ENCODE measurements at regions of chr18 and their contacts with region 1.

Region 1: DNA sequence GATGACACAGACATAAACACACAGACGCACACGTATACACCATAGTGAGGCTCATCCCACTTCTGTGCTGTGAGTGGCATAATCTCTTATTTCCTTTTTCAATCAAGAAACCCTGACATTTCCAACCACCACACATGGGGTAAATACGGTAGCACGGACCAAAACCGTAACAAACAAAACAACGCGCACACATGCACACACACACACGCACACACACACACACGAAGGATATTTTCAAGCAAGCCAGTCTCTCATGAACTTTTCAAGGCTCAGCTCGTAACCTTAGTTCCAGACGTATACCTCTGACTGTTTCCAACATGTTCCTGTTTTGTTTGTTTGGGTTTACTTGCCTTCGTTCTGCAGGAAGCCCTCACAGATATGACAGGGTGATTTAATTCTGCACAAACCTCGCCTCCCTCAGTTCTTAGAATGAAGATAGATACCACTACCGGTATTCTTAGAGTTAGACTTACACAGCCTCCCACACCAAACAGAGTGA is 119.8 kb downstream of the BCL2 start:
- DNase-seq: peak in 7 of 9 donors; percentile 57 to 82 (median 74)
- ATAC-seq: peak; percentile 84
- H3K4me3 ChIP-seq: peak overlapping the region; percentile 63
- H3K4me3 Mint-ChIP-seq: no peak overlapping the region
- H3K27ac ChIP-seq: peak overlapping the region; percentile 73
- H3K27ac Mint-ChIP-seq: no peak overlapping the region
- H3K4me1 ChIP-seq: peaks cover 37 to 71% of the 10 kb centered on the region in 2 donors
- H3K4me1 Mint-ChIP-seq: peaks cover 19 to 49% (median 33%) of the 10 kb centered on the region in 7 donors
- H3K27me3 ChIP-seq: no peaks in the 10 kb centered on the region
- H3K27me3 Mint-ChIP-seq: no peaks in the 10 kb centered on the region

Region 2: DNA sequence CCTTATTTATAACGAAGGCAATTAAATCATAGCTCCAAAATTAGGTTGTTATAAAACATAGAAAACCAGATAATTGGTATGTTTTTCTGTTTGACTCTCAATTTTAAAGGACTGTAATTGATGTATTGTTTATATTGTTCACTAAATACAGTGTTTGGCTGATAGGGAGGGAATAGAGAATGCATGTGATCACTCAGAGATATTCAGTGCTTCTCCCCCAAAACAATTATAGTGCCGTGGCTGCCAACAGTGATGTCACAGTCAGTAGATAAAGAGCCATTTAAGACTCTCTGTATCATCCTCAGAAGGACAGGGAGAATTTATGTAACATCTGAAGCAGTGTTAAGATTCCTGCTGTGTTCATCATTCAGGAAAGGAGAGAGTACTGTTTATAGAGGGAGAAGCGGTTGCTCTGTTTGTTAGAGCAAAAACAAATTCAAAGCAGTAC is 414.8 kb before region 1 on chr18:
- CTCF ChIA-PET with region 1: no interaction called
- POLR2A ChIA-PET with region 1: no interaction called
- intact Hi-C with region 1: no loop called
- DNase-seq: no peak
- ATAC-seq: no peak
- H3K4me3 ChIP-seq: no peak overlapping the region
- H3K4me3 Mint-ChIP-seq: peak overlapping the region in 2 of 10 donors; percentile 3 to 22
- H3K27ac ChIP-seq: no peak overlapping the region
- H3K27ac Mint-ChIP-seq: no peak overlapping the region
- H3K4me1 ChIP-seq: peaks cover 0 to 10% of the 10 kb centered on the region in 2 donors
- H3K4me1 Mint-ChIP-seq: peaks cover 27 to 49% (median 33%) of the 10 kb centered on the region in 7 donors
- H3K27me3 ChIP-seq: no peaks in the 10 kb centered on the region
- H3K27me3 Mint-ChIP-seq: peaks cover 0 to 2% (median 0%) of the 10 kb centered on the region in 5 donors

Region 3: DNA sequence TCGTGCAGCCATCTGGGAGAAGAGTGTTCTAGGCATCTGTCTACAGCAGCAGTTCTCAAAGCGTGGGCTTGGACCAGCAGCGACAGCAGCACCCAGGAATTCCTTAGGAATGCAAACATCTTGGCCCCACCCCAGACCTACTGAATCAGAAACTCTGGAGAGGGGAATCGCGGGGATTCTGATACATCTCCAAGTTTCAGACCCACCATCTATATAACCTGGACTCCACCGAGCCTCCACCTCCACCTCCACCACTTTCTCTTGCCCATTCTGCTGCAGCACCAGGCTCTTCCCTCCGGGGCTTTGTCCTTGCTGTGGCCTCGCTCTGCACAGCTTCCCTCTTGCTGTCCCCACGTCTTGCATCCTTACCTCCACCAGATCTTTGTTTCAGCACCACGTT is 136.6 kb before region 1 on chr18:
- CTCF ChIA-PET with region 1: no interaction called
- POLR2A ChIA-PET with region 1: no interaction called
- intact Hi-C with region 1: no loop called
- DNase-seq: no peak
- ATAC-seq: no peak
- H3K4me3 ChIP-seq: no peak overlapping the region
- H3K4me3 Mint-ChIP-seq: no peak overlapping the region
- H3K27ac ChIP-seq: no peak overlapping the region
- H3K27ac Mint-ChIP-seq: no peak overlapping the region
- H3K4me1 ChIP-seq: no peaks in the 10 kb centered on the region
- H3K4me1 Mint-ChIP-seq: peaks cover 0 to 5% (median 0%) of the 10 kb centered on the region in 7 donors
- H3K27me3 ChIP-seq: no peaks in the 10 kb centered on the region
- H3K27me3 Mint-ChIP-seq: peaks cover 0 to 38% (median 4%) of the 10 kb centered on the region in 5 donors

Region 4: GRCh38 chr18:63131106-63131958 is 68.5 kb before region 1 on chr18:
- CTCF ChIA-PET with region 1: interaction called, 4 read pairs
- POLR2A ChIA-PET with region 1: interaction called, 4 read pairs
- intact Hi-C with region 1: loop called (anchors 2 kb)
- DNase-seq: peak in 7 of 9 donors; percentile 51 to 71 (median 69)
- ATAC-seq: peak; percentile 80
- H3K4me3 ChIP-seq: no peak overlapping the region
- H3K4me3 Mint-ChIP-seq: peak overlapping the region in 9 of 10 donors; percentile 13 to 81 (median 45)
- H3K27ac ChIP-seq: peak overlapping the region; percentile 61
- H3K27ac Mint-ChIP-seq: peak overlapping the region in 8 of 9 donors; percentile 36 to 94 (median 83)
- H3K4me1 ChIP-seq: peaks cover 9 to 18% of the 10 kb centered on the region in 2 donors
- H3K4me1 Mint-ChIP-seq: peaks cover 28 to 58% (median 50%) of the 10 kb centered on the region in 7 donors
- H3K27me3 ChIP-seq: no peaks in the 10 kb centered on the region
- H3K27me3 Mint-ChIP-seq: no peaks in the 10 kb centered on the region

Region 5: GRCh38 chr18:63186520-63187222 is 13.1 kb before region 1 on chr18:
- CTCF ChIA-PET with region 1: interaction called, 3 read pairs
- POLR2A ChIA-PET with region 1: interaction called, 52 read pairs
- intact Hi-C with region 1: loop called in 1 of 2 experiments (anchors 1 kb)
- DNase-seq: no peak
- ATAC-seq: no peak
- H3K4me3 ChIP-seq: no peak overlapping the region
- H3K4me3 Mint-ChIP-seq: peak overlapping the region in 8 of 10 donors; percentile 1 to 52 (median 14)
- H3K27ac ChIP-seq: no peak overlapping the region
- H3K27ac Mint-ChIP-seq: peak overlapping the region in 8 of 9 donors; percentile 8 to 86 (median 54)
- H3K4me1 ChIP-seq: peaks cover 6 to 31% of the 10 kb centered on the region in 2 donors
- H3K4me1 Mint-ChIP-seq: peaks cover 50 to 91% (median 80%) of the 10 kb centered on the region in 7 donors
- H3K27me3 ChIP-seq: no peaks in the 10 kb centered on the region
- H3K27me3 Mint-ChIP-seq: no peaks in the 10 kb centered on the region

Region 6: DNA sequence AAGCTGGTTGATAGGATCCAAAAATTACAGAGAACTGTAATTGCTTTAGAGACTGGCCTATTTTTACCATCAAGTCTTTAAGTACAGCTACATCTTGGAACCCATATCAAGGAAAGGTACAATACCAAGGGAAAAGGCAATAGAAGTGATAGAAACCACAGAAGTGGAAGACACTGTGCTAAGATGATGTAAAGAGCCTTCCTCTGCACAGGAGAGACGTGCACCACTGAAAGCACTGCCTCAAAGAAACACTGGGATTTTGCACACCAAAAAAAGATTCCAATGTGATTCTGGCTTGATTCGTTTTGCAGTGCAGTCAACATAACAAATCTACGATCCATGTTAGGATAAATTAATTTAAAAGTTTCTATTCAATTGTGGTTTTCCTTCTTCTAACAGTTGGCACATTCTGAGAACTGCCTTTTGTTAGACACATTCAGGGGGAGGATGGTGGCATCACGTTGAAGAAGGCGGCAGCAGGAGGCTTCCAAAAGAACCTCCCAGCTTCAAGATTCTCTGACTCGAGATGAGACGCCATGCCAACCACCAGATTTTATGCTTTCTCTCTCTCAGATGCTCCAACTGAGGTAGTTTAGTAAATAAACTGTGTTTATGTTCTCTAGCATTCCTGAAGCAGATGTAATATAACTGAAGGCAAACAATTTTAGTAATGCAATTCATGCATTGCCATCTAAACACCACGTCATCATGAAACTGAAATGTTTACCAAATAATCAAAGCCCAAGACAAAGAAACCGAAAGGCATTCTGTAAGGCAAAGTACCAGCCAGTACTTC is 16.9 kb after region 1 on chr18:
- CTCF ChIA-PET with region 1: interaction called, 5 read pairs
- POLR2A ChIA-PET with region 1: interaction called, 40 read pairs
- intact Hi-C with region 1: loop called (anchors 1 kb)
- DNase-seq: peak in 7 of 9 donors; percentile 34 to 62 (median 49)
- ATAC-seq: peak; percentile 73
- H3K4me3 ChIP-seq: peak overlapping the region; percentile 25
- H3K4me3 Mint-ChIP-seq: peak overlapping the region; percentile 54 to 89 (median 78)
- H3K27ac ChIP-seq: peak overlapping the region; percentile 63
- H3K27ac Mint-ChIP-seq: peak overlapping the region; percentile 70 to 94 (median 90)
- H3K4me1 ChIP-seq: peaks cover 58 to 75% of the 10 kb centered on the region in 2 donors
- H3K4me1 Mint-ChIP-seq: peaks cover 71 to 99% (median 93%) of the 10 kb centered on the region in 7 donors
- H3K27me3 ChIP-seq: no peaks in the 10 kb centered on the region
- H3K27me3 Mint-ChIP-seq: no peaks in the 10 kb centered on the region

Region 7: GRCh38 chr18:63236413-63236812 is 36.6 kb after region 1 on chr18:
- CTCF ChIA-PET with region 1: interaction called, 3 read pairs
- POLR2A ChIA-PET with region 1: interaction called, 4 read pairs
- intact Hi-C with region 1: loop called in 1 of 2 experiments (anchors 1 kb)
- DNase-seq: no peak
- ATAC-seq: peak; percentile 84
- H3K4me3 ChIP-seq: no peak overlapping the region
- H3K4me3 Mint-ChIP-seq: peak overlapping the region in 6 of 10 donors; percentile 9 to 62 (median 31)
- H3K27ac ChIP-seq: no peak overlapping the region
- H3K27ac Mint-ChIP-seq: peak overlapping the region; percentile 30 to 90 (median 72)
- H3K4me1 ChIP-seq: peaks cover 6 to 24% of the 10 kb centered on the region in 2 donors
- H3K4me1 Mint-ChIP-seq: peaks cover 49 to 83% (median 76%) of the 10 kb centered on the region in 7 donors
- H3K27me3 ChIP-seq: no peaks in the 10 kb centered on the region
- H3K27me3 Mint-ChIP-seq: no peaks in the 10 kb centered on the region

Region 8: GRCh38 chr18:63253428-63254372 is 53.9 kb after region 1 on chr18:
- CTCF ChIA-PET with region 1: no interaction called
- POLR2A ChIA-PET with region 1: no interaction called
- intact Hi-C with region 1: loop called in 1 of 2 experiments (anchors 1 kb)
- DNase-seq: no peak
- ATAC-seq: peak; percentile 74
- H3K4me3 ChIP-seq: no peak overlapping the region
- H3K4me3 Mint-ChIP-seq: peak overlapping the region in 8 of 10 donors; percentile 1 to 64 (median 32)
- H3K27ac ChIP-seq: no peak overlapping the region
- H3K27ac Mint-ChIP-seq: peak overlapping the region in 8 of 9 donors; percentile 9 to 79 (median 53)
- H3K4me1 ChIP-seq: peaks cover 7 to 25% of the 10 kb centered on the region in 2 donors
- H3K4me1 Mint-ChIP-seq: peaks cover 42 to 81% (median 73%) of the 10 kb centered on the region in 7 donors
- H3K27me3 ChIP-seq: no peaks in the 10 kb centered on the region
- H3K27me3 Mint-ChIP-seq: no peaks in the 10 kb centered on the region

Region 9: GRCh38 chr18:63265288-63265687 is 65.5 kb after region 1 on chr18:
- CTCF ChIA-PET with region 1: no interaction called
- POLR2A ChIA-PET with region 1: no interaction called
- intact Hi-C with region 1: no loop called
- DNase-seq: no peak
- ATAC-seq: no peak
- H3K4me3 ChIP-seq: no peak overlapping the region
- H3K4me3 Mint-ChIP-seq: peak overlapping the region in 1 of 10 donors; percentile 41
- H3K27ac ChIP-seq: no peak overlapping the region
- H3K27ac Mint-ChIP-seq: peak overlapping the region in 2 of 9 donors; percentile 36 to 70
- H3K4me1 ChIP-seq: peaks cover 16 to 23% of the 10 kb centered on the region in 2 donors
- H3K4me1 Mint-ChIP-seq: peaks cover 45 to 91% (median 76%) of the 10 kb centered on the region in 7 donors
- H3K27me3 ChIP-seq: no peaks in the 10 kb centered on the region
- H3K27me3 Mint-ChIP-seq: no peaks in the 10 kb centered on the region

Region 10: GRCh38 chr18:63367053-63367953 is 167.5 kb after region 1 on chr18 and contains the start of gene KDSR:
- CTCF ChIA-PET with region 1: no interaction called
- POLR2A ChIA-PET with region 1: no interaction called
- intact Hi-C with region 1: loop called in 1 of 2 experiments (anchors 5 kb)
- DNase-seq: peak; percentile 71 to 90 (median 79)
- ATAC-seq: peak; percentile 92
- H3K4me3 ChIP-seq: peak within 1 kb of the TSS; percentile 92
- H3K4me3 Mint-ChIP-seq: peak within 1 kb of the TSS; percentile 85 to 99 (median 94)
- H3K27ac ChIP-seq: peak within 1 kb of the TSS; percentile 77
- H3K27ac Mint-ChIP-seq: peak within 1 kb of the TSS; percentile 84 to 92 (median 89)
- H3K4me1 ChIP-seq: peaks cover 6 to 29% of the 10 kb centered on the region in 2 donors
- H3K4me1 Mint-ChIP-seq: peaks cover 32 to 56% (median 41%) of the 10 kb centered on the region in 7 donors
- H3K27me3 ChIP-seq: no peaks in the 10 kb centered on the region
- H3K27me3 Mint-ChIP-seq: no peaks in the 10 kb centered on the region
- total RNA-seq, gene KDSR: 24.4 to 57.9 (median 46.9) TPM

Region 11: DNA sequence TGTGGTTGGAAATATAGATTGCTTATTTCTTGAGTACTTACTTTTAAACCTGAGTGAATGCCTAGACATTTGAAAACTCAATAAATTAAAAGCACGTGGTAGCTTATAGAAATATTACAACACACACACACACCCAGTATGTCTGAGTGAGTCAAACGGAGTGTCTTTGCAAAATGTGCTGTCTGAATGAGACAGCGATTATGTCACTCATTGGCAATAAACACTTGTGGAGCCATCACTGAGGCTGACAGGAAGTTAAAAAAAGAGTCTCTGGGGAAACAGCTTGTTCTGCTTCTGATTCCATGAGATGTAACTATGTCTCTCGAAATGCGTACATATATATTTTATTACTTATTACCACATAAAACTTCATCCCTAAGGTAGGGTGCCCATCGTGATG is 244.8 kb after region 1 on chr18:
- CTCF ChIA-PET with region 1: no interaction called
- POLR2A ChIA-PET with region 1: no interaction called
- intact Hi-C with region 1: no loop called
- DNase-seq: no peak
- ATAC-seq: peak; percentile 82
- H3K4me3 ChIP-seq: no peak overlapping the region
- H3K4me3 Mint-ChIP-seq: no peak overlapping the region
- H3K27ac ChIP-seq: no peak overlapping the region
- H3K27ac Mint-ChIP-seq: no peak overlapping the region
- H3K4me1 ChIP-seq: no peaks in the 10 kb centered on the region
- H3K4me1 Mint-ChIP-seq: no peaks in the 10 kb centered on the region
- H3K27me3 ChIP-seq: no peaks in the 10 kb centered on the region
- H3K27me3 Mint-ChIP-seq: peaks cover 0 to 19% (median 0%) of the 10 kb centered on the region in 5 donors